Heart right ventricle (tissue), 16 donors: ENCODE measurements at regions of chr21 and their contacts with region 1.

Region 1: DNA sequence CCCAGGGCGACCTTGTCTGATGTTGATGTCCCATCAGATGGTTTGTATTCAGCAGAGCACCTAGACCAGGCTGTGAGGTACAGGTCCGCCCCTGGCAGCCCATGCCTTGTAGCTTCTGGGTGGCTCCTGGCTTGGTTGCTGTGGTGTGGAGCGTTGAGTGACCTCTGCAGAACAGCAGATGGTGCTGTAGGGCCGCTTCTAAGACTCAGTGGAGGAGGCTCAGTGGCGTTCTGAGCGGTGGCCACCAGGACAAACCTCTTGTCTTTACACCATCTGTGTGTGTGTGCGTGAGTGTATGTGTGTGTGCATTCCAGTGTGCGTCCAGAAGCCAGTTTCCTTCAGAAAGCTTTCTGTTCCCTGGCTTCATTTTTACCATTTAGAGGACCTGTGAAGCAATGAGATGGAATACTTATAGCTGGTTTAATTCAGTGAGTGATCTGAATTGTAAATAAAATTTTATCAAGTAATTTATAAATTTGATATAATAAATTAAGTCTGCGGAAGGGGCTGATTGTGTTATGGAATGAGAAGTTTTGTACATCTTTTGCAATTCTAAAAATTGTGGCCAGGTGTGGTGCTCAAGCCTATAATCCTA is 66.1 kb downstream of the ADARB1 start:
- DNase-seq: peak; percentile 57 to 70
- ATAC-seq: peak; percentile 77 to 88 (median 86)
- H3K4me3 ChIP-seq: no peak overlapping the region
- H3K27ac ChIP-seq: no peak overlapping the region
- H3K4me1 ChIP-seq: peaks cover 0 to 30% (median 14%) of the 10 kb centered on the region in 9 donors
- H3K27me3 ChIP-seq: no peaks in the 10 kb centered on the region
- CTCF ChIP-seq: peak; percentile 38 to 86 (median 77)

Region 2: GRCh38 chr21:44801468-44802395 is 338.7 kb before region 1 on chr21 and contains the start of gene UBE2G2:
- intact Hi-C with region 1: loop called in 1 of 10 experiments (anchors 10 kb)
- DNase-seq: peak; percentile 77 to 87
- ATAC-seq: peak; percentile 96 to 98 (median 97)
- H3K4me3 ChIP-seq: peak within 1 kb of the TSS; percentile 69 to 98 (median 85)
- H3K27ac ChIP-seq: peak within 1 kb of the TSS in 9 of 10 donors; percentile 61 to 86 (median 79)
- H3K4me1 ChIP-seq: peaks cover 3 to 46% (median 30%) of the 10 kb centered on the region in 9 donors
- H3K27me3 ChIP-seq: no peaks in the 10 kb centered on the region
- CTCF ChIP-seq: no peak
- total RNA-seq, gene UBE2G2: 58.1 to 89.5 (median 67.0) TPM

Region 3: DNA sequence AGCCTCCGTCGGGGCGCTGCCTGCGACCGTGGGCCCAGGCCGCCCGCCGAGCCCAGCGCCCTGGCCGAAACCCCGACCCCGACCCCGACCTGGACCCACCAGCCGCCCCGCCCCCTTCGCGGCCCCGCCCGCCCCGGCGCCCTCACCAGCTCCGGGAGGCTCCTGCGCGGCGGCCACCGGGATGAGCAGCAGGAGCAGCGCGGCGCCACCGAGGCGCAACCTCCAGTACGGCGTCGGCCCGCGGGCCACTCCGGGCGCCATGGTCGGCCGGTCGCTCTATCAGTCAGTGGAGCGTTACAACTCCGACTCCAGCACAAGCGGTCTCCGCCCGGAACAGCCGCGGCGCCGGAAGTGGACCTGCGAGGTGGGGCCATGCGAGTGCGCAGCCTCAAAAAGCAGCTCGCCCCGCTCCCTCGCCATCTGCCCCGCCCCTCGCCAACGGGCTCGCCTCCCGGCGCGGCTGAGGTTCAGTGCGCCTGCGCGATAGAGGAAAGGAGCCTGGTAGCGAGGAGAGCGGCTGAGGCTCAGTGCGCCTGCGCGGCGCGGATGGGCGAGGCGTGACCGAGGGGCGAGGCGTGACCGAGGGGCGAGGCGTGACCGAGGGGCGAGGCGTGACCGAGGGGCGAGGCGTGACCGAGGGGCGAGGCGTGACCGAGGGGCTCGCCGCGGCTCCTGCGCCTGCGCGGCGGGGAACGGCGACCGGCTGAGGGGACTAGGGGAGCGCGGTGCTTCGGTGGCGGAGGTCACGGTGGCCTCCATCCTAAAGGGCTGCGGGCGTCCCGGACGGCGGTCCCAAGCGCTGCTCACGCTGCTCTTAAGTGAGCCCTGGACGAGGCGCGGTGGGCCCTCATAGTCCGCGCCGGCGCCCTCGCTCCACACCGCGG is 266.8 kb before region 1 on chr21 and contains the start of gene PTTG1IP:
- intact Hi-C with region 1: loop called in 2 of 10 experiments (anchors 10 kb)
- DNase-seq: peak; percentile 98 to 100
- ATAC-seq: peak; percentile 82 to 90 (median 87)
- H3K4me3 ChIP-seq: peak within 1 kb of the TSS; percentile 64 to 95 (median 85)
- H3K27ac ChIP-seq: peak within 1 kb of the TSS; percentile 83 to 99 (median 95)
- H3K4me1 ChIP-seq: peaks cover 12 to 88% (median 52%) of the 10 kb centered on the region in 9 donors
- H3K27me3 ChIP-seq: no peaks in the 10 kb centered on the region
- CTCF ChIP-seq: no peak
- total RNA-seq, gene PTTG1IP: 109 to 188 (median 148) TPM

Region 4: DNA sequence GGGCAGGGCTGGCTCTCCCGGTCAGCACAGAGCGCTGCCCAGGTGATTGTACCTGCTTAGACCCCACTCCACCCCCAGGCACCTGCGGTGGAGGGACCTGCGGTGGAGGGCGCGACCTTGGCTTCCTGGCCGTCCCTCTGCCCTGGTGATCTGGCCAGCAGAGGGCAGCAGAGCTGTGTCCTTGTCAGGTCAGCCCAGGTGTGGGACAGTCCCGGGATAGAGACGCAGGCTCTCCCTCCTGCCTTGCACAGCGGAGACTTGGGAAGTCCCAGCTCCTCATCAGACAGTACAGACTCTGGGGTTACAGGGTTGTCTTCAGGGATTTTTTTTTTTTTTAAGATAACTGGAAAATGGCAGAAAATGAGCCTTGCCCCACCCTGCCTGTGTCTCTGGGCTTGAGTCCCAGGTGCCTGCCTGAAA is 190.7 kb before region 1 on chr21:
- intact Hi-C with region 1: loop called in 8 of 10 experiments (anchors 2 to 5 kb)
- DNase-seq: peak; percentile 91 to 93
- ATAC-seq: peak; percentile 63 to 76 (median 67)
- H3K4me3 ChIP-seq: no peak overlapping the region
- H3K27ac ChIP-seq: peak overlapping the region; percentile 42 to 86 (median 79)
- H3K4me1 ChIP-seq: peaks cover 13 to 90% (median 53%) of the 10 kb centered on the region in 9 donors
- H3K27me3 ChIP-seq: no peaks in the 10 kb centered on the region
- CTCF ChIP-seq: peak; percentile 88 to 98 (median 96)

Region 5: GRCh38 chr21:45091550-45092322 is 48.7 kb before region 1 on chr21:
- intact Hi-C with region 1: loop called in 1 of 10 experiments (anchors 2 kb)
- DNase-seq: no peak
- ATAC-seq: peak in 3 of 8 donors; percentile 28 to 53 (median 40)
- H3K4me3 ChIP-seq: no peak overlapping the region
- H3K27ac ChIP-seq: peak overlapping the region in 9 of 10 donors; percentile 1 to 93 (median 75)
- H3K4me1 ChIP-seq: peaks cover 7 to 74% (median 58%) of the 10 kb centered on the region in 9 donors
- H3K27me3 ChIP-seq: no peaks in the 10 kb centered on the region
- CTCF ChIP-seq: no peak

Region 6: GRCh38 chr21:45287438-45288391 is 147.3 kb after region 1 on chr21 and contains the start of gene POFUT2:
- intact Hi-C with region 1: loop called in 2 of 10 experiments (anchors 10 kb)
- DNase-seq: peak; percentile 97 to 99
- ATAC-seq: peak; percentile 89 to 93 (median 92)
- H3K4me3 ChIP-seq: peak within 1 kb of the TSS; percentile 41 to 77 (median 68)
- H3K27ac ChIP-seq: peak within 1 kb of the TSS in 9 of 10 donors; percentile 35 to 90 (median 81)
- H3K4me1 ChIP-seq: peaks cover 16 to 40% (median 28%) of the 10 kb centered on the region in 9 donors
- H3K27me3 ChIP-seq: no peaks in the 10 kb centered on the region
- CTCF ChIP-seq: peak in 1 of 9 donors; percentile 3
- total RNA-seq, gene POFUT2: 12.7 to 20.4 (median 16.3) TPM

Region 7: DNA sequence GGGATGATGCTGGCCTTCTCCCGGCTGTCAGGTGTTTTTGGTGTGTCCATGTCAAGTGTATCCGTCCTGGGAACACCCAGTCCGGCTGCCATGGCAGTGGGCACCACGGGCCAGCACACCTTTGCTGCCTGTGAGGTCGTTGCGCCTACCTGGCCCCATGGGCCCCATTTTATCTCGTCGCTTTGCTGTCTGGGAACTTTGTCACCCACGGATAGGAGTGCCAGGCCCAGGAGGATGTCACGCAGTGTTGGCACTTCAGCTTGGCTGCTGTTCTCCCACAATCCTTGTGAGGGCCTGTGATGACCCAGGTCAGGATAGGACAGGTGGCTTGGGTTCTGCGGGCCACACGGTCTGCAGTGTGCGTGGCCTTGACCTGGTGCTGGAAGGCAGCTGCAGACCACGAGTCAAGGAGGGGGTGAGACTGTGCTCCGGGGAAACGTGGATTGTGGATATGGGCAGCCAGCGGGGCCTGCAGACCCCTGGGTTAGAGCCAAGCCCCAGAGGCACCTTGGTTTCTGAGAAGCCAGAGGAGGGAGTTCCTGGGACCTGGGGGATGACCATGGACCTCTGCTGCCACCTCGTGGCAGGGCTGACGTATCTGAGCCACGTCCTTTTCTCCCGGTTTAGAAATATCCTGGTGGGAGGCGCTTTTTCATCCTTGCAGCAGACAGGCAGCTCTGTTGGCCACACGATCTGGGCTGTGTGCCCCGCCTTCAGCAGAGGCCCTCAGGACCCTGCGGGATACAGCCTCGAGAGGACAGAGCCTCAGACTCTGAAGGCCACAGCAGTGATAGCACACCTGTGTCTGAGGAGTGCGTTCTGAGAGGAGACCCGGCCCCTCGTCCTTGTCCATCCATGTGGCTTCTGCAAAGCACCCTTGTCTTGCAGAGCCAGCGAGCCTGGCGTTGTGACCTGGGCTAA is 680.0 kb after region 1 on chr21:
- intact Hi-C with region 1: loop called in 1 of 10 experiments (anchors 5 kb)
- DNase-seq: peak; percentile 64 to 82
- ATAC-seq: peak; percentile 83 to 90 (median 87)
- H3K4me3 ChIP-seq: no peak overlapping the region
- H3K27ac ChIP-seq: no peak overlapping the region
- H3K4me1 ChIP-seq: peaks cover 0 to 19% (median 0%) of the 10 kb centered on the region in 9 donors
- H3K27me3 ChIP-seq: peaks cover 0 to 26% (median 0%) of the 10 kb centered on the region in 7 donors
- CTCF ChIP-seq: peak; percentile 63 to 90 (median 81)